ENCODE measurements at regions of chr14 and their contacts with region 1.

Region 1: DNA sequence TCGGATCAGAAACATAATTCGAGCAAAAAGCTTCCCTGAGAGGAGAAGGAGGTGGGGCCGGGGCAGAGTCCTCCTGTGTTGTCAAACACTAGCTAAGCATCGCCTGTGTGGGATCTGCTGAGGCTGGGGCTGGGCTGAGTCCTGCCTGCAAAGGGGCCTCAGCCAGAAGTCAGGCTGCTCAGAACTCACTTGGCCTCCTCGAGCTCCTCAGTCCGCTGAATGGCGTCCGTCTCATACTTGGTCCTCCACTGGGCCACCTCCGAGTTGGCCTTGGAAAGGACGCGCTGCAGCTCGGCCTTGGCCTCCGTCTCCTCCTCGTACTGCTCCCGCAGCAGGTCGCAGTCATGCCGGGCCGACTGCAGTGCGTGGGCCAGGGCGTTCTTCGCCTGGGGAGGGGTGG is 9.9 kb upstream of the MYH6 start:
- DNase-seq: no peak
- ATAC-seq: no peak
- H3K4me3 ChIP-seq: no peak overlapping the region
- H3K27ac ChIP-seq: no peak overlapping the region
- H3K4me1 ChIP-seq: no peaks in the 10 kb centered on the region
- H3K27me3 ChIP-seq: peaks cover 5% of the 10 kb centered on the region; the same call in 1 of the 2 replicates
- CTCF ChIP-seq: no peak
- POLR2A ChIP-seq: no peak
- RAD21 ChIP-seq: no peak

Region 2: GRCh38 chr14:23352511-23353432 is 65.2 kb before region 1 on chr14 and contains the start of gene SLC22A17:
- CTCF ChIA-PET with region 1: no interaction called
- POLR2A ChIA-PET with region 1: no interaction called
- RAD21 ChIA-PET with region 1: no interaction called
- intact Hi-C with region 1: no loop called
- DNase-seq: peak; percentile 13
- ATAC-seq: peak; percentile 91
- H3K4me3 ChIP-seq: peak within 1 kb of the TSS; percentile 50 to 60
- H3K27ac ChIP-seq: peak within 1 kb of the TSS; percentile 25; the same call in 1 of the 2 replicates
- H3K4me1 ChIP-seq: 0 out of 4 replicates have a peak, but pooled peaks cover 0 to 2% of the 10 kb centered on the region in 2 experiments
- H3K27me3 ChIP-seq: no peaks in the 10 kb centered on the region
- CTCF ChIP-seq: no peak
- POLR2A ChIP-seq: no peak
- RAD21 ChIP-seq: no peak
- total RNA-seq, gene SLC22A17: 5.9 TPM

Region 3: GRCh38 chr14:23430788-23431085 is 12.7 kb after region 1 on chr14:
- CTCF ChIA-PET with region 1: no interaction called
- POLR2A ChIA-PET with region 1: no interaction called
- RAD21 ChIA-PET with region 1: no interaction called
- intact Hi-C with region 1: no loop called
- DNase-seq: no peak
- ATAC-seq: no peak
- H3K4me3 ChIP-seq: no peak overlapping the region
- H3K27ac ChIP-seq: no peak overlapping the region
- H3K4me1 ChIP-seq: no peaks in the 10 kb centered on the region
- H3K27me3 ChIP-seq: peaks cover 12% of the 10 kb centered on the region
- CTCF ChIP-seq: no peak
- POLR2A ChIP-seq: no peak
- RAD21 ChIP-seq: no peak

Region 4: GRCh38 chr14:23452237-23452636 is 34.2 kb after region 1 on chr14:
- CTCF ChIA-PET with region 1: no interaction called
- POLR2A ChIA-PET with region 1: no interaction called
- RAD21 ChIA-PET with region 1: no interaction called
- intact Hi-C with region 1: loop called (anchors 2 kb)
- DNase-seq: no peak
- ATAC-seq: no peak
- H3K4me3 ChIP-seq: no peak overlapping the region
- H3K27ac ChIP-seq: no peak overlapping the region
- H3K4me1 ChIP-seq: no peaks in the 10 kb centered on the region
- H3K27me3 ChIP-seq: no peaks in the 10 kb centered on the region
- CTCF ChIP-seq: no peak
- POLR2A ChIP-seq: no peak
- RAD21 ChIP-seq: no peak

Measured in HCT116 (cell line).